ENCODE measurements at regions of chr3 and their contacts with region 1.

Region 1: GRCh38 chr3:194003125-194004057 is 132.6 kb upstream of the HES1 start:
- DNase-seq: peak; percentile 94

Region 2: DNA sequence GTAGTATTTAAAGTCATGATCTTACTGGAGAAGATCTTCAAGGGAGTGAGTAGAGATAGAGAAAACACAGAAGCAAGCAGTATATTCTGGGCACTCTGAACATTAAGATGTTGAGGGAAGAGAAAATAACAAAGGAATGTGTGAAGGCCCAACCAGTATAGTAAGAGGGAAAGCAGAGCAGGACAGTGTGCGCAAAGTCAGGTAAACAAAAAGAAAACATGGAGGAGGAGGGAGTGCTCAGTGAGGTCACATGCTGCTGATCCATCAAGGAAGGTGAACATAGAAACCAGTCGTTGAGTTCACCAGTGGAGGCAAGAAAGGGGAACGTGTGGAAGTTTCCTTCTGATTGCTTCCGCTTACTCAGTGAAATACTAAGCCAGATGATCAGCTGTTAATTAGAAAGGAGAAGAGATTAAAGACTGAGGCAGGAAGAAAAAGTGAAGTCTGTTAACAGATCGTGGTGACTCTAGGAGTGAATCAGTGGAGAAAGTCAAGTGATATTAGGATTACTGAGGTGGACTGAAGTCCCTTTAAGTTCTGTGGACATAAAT is 363.2 kb before region 1 on chr3:
- intact Hi-C with region 1: no loop called
- DNase-seq: no peak

Region 3: DNA sequence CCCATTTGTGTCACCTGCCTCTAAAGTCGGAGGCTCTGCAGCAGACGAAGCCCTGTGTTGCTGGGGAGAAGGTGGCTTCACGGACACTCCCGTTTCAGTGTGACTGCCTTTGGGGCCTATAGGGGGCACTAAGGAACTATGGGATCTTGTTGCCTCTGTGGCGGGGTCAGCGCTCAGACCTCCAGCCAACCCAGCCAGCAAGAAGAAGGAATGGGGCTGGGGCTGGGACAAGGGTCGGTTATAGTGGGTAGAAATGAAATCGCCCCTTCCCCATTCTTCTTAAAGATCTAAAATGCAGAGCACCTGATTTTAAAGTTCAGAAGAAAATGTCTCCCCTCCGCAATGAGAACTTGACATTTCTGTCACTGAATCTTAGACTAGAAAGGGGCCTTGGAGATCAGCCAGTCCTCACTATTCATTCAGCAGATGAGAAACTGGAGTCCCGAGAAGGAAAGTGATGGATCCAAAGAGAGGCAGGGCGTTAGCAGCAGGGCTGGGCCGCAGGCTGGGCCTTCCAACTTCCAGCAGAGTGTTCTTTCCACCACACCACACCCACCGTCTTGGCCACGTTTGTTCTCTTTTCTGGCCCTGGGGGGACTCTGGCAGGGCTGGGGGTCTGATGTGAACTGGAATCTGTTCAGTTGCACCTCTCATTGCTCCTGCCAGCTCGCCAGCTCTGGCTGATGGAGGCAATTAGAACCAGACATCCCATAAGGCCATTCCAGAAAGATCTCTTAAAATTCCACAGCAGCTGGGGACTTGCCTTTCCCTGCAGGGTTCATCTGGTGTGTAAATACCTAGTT is 215.0 kb before region 1 on chr3:
- intact Hi-C with region 1: loop called (anchors 5 kb)
- DNase-seq: no peak

Region 4: DNA sequence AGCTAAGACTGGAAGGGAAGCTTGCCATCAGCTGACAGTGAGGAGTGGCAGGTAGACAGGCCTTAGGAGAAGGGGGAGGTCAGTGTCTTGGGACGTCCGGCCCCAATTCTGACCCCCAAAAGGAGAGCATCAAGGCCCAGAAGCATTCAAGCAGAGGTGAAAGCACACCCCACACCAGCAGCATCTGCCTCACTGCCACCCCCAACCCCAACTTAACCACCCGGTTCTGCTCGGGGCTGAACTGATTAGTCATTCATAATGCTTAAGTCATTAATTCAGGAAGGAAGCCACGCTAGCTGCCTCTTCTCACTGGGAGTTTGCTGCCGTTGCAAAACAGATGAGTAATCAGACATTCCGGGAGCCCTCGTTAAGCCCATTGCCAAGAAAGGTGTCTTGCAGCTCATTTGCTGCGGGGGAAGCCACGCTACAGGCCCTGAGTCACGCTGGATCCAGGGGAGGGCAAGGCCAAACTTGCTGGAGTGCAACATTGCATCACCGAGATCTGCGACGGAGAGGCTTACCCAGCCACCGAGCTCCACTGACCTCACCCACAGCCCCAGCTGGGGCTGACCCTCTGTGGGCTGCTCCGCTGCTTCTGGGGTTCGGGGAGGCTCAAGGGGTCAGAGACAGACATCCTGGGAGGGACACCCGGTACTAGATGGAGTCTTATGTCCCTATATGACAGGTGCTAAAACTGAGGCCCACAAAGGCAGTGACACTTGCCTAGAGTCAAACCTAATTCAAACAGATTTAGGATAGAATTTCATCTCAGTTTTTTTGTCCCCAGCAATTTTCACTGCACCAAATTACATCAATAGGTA is 86.2 kb after region 1 on chr3:
- intact Hi-C with region 1: no loop called
- DNase-seq: peak; percentile 93

Measured in cardiac septum (tissue), 1 donor.